Gastrocnemius medialis (tissue), 4 donors: ENCODE measurements at regions of chr3 and their contacts with region 1.

Region 1: GRCh38 chr3:23805633-23806533 is at the start of gene UBE2E1:
- DNase-seq: peak; percentile 56 to 69
- ATAC-seq: peak; percentile 60 to 70
- H3K4me3 ChIP-seq: peak within 1 kb of the TSS; percentile 73 to 97 (median 94)
- H3K27ac ChIP-seq: peak within 1 kb of the TSS; percentile 85 to 98 (median 94)
- H3K4me1 ChIP-seq: peaks cover 30 to 33% of the 10 kb centered on the region in 2 donors
- H3K27me3 ChIP-seq: no peaks in the 10 kb centered on the region
- CTCF ChIP-seq: no peak
- POLR2A ChIP-seq: peak; percentile 53 to 55
- total RNA-seq, gene UBE2E1: 54.8 to 153 (median 109) TPM

Region 2: GRCh38 chr3:23202921-23203707 is 602.8 kb before region 1 on chr3 and contains the start of gene UBE2E2:
- in situ Hi-C with region 1: no loop called
- intact Hi-C with region 1: loop called (anchors 2 kb)
- DNase-seq: peak; percentile 72 to 78
- ATAC-seq: peak; percentile 75
- H3K4me3 ChIP-seq: peak within 1 kb of the TSS; percentile 67 to 84 (median 78)
- H3K27ac ChIP-seq: peak within 1 kb of the TSS; percentile 90 to 95 (median 92)
- H3K4me1 ChIP-seq: peaks cover 37 to 48% of the 10 kb centered on the region in 2 donors
- H3K27me3 ChIP-seq: no peaks in the 10 kb centered on the region
- CTCF ChIP-seq: no peak
- POLR2A ChIP-seq: peak; percentile 95 to 97
- total RNA-seq, gene UBE2E2: 7.9 to 44.7 (median 26.6) TPM

Region 3: GRCh38 chr3:23324745-23325144 is 481.1 kb before region 1 on chr3:
- in situ Hi-C with region 1: no loop called
- intact Hi-C with region 1: loop called (anchors 10 kb)
- DNase-seq: no peak
- ATAC-seq: no peak
- H3K4me3 ChIP-seq: no peak overlapping the region
- H3K27ac ChIP-seq: no peak overlapping the region
- H3K4me1 ChIP-seq: peaks cover 24 to 28% of the 10 kb centered on the region in 2 donors
- H3K27me3 ChIP-seq: no peaks in the 10 kb centered on the region
- CTCF ChIP-seq: no peak
- POLR2A ChIP-seq: no peak

Region 4: GRCh38 chr3:23435318-23435717 is 370.6 kb before region 1 on chr3:
- in situ Hi-C with region 1: no loop called
- intact Hi-C with region 1: loop called (anchors 10 kb)
- DNase-seq: no peak
- ATAC-seq: no peak
- H3K4me3 ChIP-seq: no peak overlapping the region
- H3K27ac ChIP-seq: no peak overlapping the region
- H3K4me1 ChIP-seq: peaks cover 34 to 43% of the 10 kb centered on the region in 2 donors
- H3K27me3 ChIP-seq: no peaks in the 10 kb centered on the region
- CTCF ChIP-seq: no peak
- POLR2A ChIP-seq: no peak

Region 5: GRCh38 chr3:23776352-23776891 is 29.5 kb before region 1 on chr3:
- in situ Hi-C with region 1: no loop called
- intact Hi-C with region 1: no loop called
- DNase-seq: peak in 1 of 2 donors; percentile 6
- ATAC-seq: peak; percentile 88 to 97
- H3K4me3 ChIP-seq: no peak overlapping the region
- H3K27ac ChIP-seq: peak overlapping the region; percentile 47 to 69 (median 62)
- H3K4me1 ChIP-seq: peaks cover 7 to 13% of the 10 kb centered on the region in 2 donors
- H3K27me3 ChIP-seq: no peaks in the 10 kb centered on the region
- CTCF ChIP-seq: no peak
- POLR2A ChIP-seq: no peak

Region 6: GRCh38 chr3:23845326-23846221 is 39.7 kb after region 1 on chr3:
- in situ Hi-C with region 1: no loop called
- intact Hi-C with region 1: no loop called
- DNase-seq: no peak
- ATAC-seq: no peak
- H3K4me3 ChIP-seq: no peak overlapping the region
- H3K27ac ChIP-seq: no peak overlapping the region
- H3K4me1 ChIP-seq: peaks cover 8 to 11% of the 10 kb centered on the region in 2 donors
- H3K27me3 ChIP-seq: no peaks in the 10 kb centered on the region
- CTCF ChIP-seq: no peak
- POLR2A ChIP-seq: no peak

Region 7: DNA sequence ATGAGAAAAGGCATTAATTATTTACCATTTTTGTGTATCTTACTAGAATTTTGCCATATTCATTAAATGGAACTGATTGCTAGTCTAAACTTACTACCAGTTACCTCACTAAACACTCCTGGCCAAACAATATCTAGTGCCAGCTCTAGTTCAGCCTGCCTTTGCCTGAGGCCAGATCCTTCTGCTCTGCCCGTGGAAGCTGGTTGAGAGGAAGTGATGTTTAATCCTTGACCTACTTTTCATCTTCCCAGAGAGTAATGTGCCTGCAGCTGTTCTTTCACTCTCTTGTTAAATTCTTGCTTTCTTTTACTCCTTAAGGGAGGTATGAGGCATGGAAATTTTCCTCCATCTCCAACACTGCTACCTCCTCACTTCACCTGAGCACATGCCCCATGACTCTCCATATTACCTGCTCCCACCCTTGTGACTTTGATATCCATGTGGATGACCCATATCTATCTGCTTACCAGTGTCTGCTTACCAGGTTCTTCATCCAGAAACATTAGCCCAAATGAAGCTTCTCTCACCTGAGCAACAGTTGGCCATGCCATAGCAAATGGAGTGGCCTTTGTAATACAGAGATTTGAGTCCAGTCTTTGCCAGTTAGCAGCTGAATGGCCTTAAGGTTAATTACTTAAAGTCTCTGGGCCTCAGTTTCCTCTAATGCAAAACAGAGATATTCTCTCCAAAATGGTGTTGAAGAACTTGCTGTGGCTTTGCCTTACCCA is 53.3 kb after region 1 on chr3:
- in situ Hi-C with region 1: no loop called
- intact Hi-C with region 1: loop called (anchors 2 kb)
- DNase-seq: peak; percentile 70 to 76
- ATAC-seq: peak; percentile 96 to 98
- H3K4me3 ChIP-seq: no peak overlapping the region
- H3K27ac ChIP-seq: peak overlapping the region; percentile 70 to 80 (median 76)
- H3K4me1 ChIP-seq: peaks cover 57 to 66% of the 10 kb centered on the region in 2 donors
- H3K27me3 ChIP-seq: no peaks in the 10 kb centered on the region
- CTCF ChIP-seq: no peak
- POLR2A ChIP-seq: no peak

Region 8: GRCh38 chr3:23916886-23917678 is 111.2 kb after region 1 on chr3 and contains the starts of genes NKIRAS1 and RPL15:
- in situ Hi-C with region 1: no loop called
- intact Hi-C with region 1: loop called (anchors 1 kb)
- DNase-seq: peak; percentile 97 to 98
- ATAC-seq: peak; percentile 97
- H3K4me3 ChIP-seq: peak within 1 kb of the TSS; percentile 83 to 96 (median 93)
- H3K27ac ChIP-seq: peak within 1 kb of the TSS; percentile 91 to 96 (median 92)
- H3K4me1 ChIP-seq: peaks cover 30 to 37% of the 10 kb centered on the region in 2 donors
- H3K27me3 ChIP-seq: no peaks in the 10 kb centered on the region
- CTCF ChIP-seq: peak in 4 of 5 experiments; percentile 62 to 80 (median 74)
- POLR2A ChIP-seq: peak; percentile 97 to 98
- total RNA-seq, gene NKIRAS1: 25.1 to 42.1 (median 34.7) TPM
- total RNA-seq, gene RPL15: 1,370 to 1,628 (median 1,557) TPM

Region 9: DNA sequence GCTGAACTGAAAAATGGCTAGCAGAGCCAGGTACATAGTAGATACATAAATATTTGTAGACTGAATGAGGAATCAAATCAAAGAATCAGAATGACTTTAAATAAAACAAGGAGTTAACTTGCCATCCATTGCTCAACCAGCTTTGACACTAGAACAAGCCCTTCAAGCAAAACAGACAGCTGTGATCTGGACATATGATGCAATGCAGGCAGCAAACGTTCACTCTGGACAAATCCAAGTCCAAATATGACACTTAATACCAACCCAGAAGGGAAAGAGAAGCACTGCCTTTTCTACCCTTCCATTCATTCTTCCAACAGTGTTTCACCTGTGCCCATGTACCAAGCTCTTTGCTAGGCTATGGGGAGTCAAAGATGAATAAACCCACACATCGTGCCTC is 684.3 kb after region 1 on chr3:
- in situ Hi-C with region 1: no loop called
- intact Hi-C with region 1: no loop called
- DNase-seq: peak; percentile 85 to 86
- ATAC-seq: peak; percentile 78 to 79
- H3K4me3 ChIP-seq: peak overlapping the region in 3 of 4 donors; percentile 10 to 28 (median 12)
- H3K27ac ChIP-seq: peak overlapping the region; percentile 83 to 99 (median 97)
- H3K4me1 ChIP-seq: peaks cover 63 to 77% of the 10 kb centered on the region in 2 donors
- H3K27me3 ChIP-seq: no peaks in the 10 kb centered on the region
- CTCF ChIP-seq: no peak
- POLR2A ChIP-seq: no peak